ENCODE measurements at regions of chr13 and their contacts with region 1.

Region 1: GRCh38 chr13:21344662-21345176 is 114.4 kb downstream of the ZDHHC20 start:
- DNase-seq: peak; percentile 55
- H3K4me3 Mint-ChIP-seq: peak overlapping the region; percentile 68
- H3K27ac Mint-ChIP-seq: peak overlapping the region; percentile 93
- H3K4me1 Mint-ChIP-seq: peaks cover 32% of the 10 kb centered on the region
- H3K27me3 Mint-ChIP-seq: no peaks in the 10 kb centered on the region

Region 2: DNA sequence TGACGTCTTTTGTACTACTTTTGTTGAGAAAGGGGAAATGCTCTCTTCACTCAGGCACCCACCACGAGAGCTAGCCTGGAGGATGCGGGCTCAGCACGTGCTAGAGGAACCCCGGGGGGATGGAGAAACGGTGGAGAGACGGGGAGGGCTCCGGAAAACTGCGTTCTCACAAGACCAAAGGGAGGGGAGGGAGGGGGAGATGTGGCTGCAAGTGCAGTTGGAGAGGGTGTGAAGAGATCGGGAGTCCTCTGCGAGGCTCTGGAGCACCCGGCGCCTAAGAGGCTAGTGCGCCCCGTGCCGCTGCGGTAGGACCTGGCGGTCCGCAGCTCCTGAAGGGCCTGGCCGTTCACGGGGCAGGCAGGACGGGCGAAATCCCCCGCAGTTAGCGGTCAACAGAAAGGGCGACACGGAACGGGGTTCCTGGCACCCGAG is 398.8 kb before region 1 on chr13:
- CTCF ChIA-PET with region 1: no interaction called
- POLR2A ChIA-PET with region 1: interaction called, 11 read pairs
- DNase-seq: peak; percentile 8
- H3K4me3 Mint-ChIP-seq: peak overlapping the region; percentile 35
- H3K27ac Mint-ChIP-seq: no peak overlapping the region
- H3K4me1 Mint-ChIP-seq: peaks cover 13% of the 10 kb centered on the region
- H3K27me3 Mint-ChIP-seq: peaks cover 49% of the 10 kb centered on the region

Region 3: GRCh38 chr13:21355304-21355703 is 10.6 kb after region 1 on chr13:
- CTCF ChIA-PET with region 1: interaction called, 10 read pairs
- POLR2A ChIA-PET with region 1: no interaction called
- DNase-seq: no peak
- H3K4me3 Mint-ChIP-seq: no peak overlapping the region
- H3K27ac Mint-ChIP-seq: no peak overlapping the region
- H3K4me1 Mint-ChIP-seq: no peaks in the 10 kb centered on the region
- H3K27me3 Mint-ChIP-seq: no peaks in the 10 kb centered on the region

Region 4: DNA sequence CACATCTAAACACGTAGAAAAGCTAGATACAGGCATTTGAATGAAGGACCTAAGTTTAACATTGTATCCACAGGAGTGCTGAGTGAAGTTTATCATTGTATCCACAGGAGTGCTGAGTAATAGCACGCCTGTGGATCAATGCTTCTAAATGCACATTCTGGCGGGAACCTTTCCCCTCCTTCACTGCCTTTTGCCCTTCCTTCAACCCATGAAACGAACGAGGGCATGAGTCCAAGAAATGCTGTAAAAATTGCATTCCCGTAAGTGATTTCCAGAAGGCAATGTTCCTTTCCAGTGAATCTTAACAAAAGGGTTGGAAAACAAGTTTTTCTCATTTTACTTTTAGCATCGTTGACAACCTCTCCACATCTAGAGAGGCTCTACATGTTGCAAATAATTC is 26.3 kb after region 1 on chr13:
- CTCF ChIA-PET with region 1: no interaction called
- POLR2A ChIA-PET with region 1: no interaction called
- DNase-seq: no peak
- H3K4me3 Mint-ChIP-seq: no peak overlapping the region
- H3K27ac Mint-ChIP-seq: no peak overlapping the region
- H3K4me1 Mint-ChIP-seq: peaks cover under 1% of the 10 kb centered on the region
- H3K27me3 Mint-ChIP-seq: no peaks in the 10 kb centered on the region

Region 5: DNA sequence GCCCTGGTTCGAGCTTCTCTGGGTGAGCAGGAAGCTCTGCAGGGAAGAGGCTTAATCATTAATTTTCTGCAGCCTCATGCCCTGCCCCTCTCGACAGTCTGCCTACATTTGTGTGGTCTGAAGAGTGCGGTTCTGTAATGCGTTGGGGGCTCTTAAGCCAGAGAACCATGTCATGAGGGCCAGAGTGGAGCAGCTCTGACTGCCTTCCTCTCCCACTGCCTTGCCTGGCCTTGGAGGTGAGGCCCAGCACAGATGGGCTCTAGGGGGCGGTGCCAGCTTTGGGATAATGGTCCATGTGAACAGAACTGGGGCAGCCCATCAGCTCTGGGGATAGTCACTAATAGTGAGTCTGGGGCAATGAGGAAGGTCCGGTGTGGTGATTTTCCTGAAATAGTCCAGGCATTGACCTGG is 331.9 kb after region 1 on chr13:
- CTCF ChIA-PET with region 1: no interaction called
- POLR2A ChIA-PET with region 1: no interaction called
- DNase-seq: no peak
- H3K4me3 Mint-ChIP-seq: no peak overlapping the region
- H3K27ac Mint-ChIP-seq: no peak overlapping the region
- H3K4me1 Mint-ChIP-seq: peaks cover 25% of the 10 kb centered on the region
- H3K27me3 Mint-ChIP-seq: peaks cover 63% of the 10 kb centered on the region

Measured in activated CD4-positive, alpha-beta T cell treated with anti-CD3 and anti-CD28 coated beads, Interleukin-2, amount 10 ng/mL, durations not matched to agents 7 days and 5 days (primary cell).